Dendritic cell treated with granulocyte-macrophage colony-stimulating factor and Interleukin-4, amounts not matched to agents 40 ng/mL and 50 ng/mL, for 4 days (primary cell): ENCODE measurements at regions of chr1 and their contacts with region 1.

Region 1: GRCh38 chr1:27858072-27858958 is 14.0 kb upstream of the THEMIS2 start:
- H3K4me3 Mint-ChIP-seq: peak overlapping the region; percentile 60
- H3K27ac Mint-ChIP-seq: peak overlapping the region; percentile 88
- H3K4me1 Mint-ChIP-seq: peaks cover 54% of the 10 kb centered on the region
- H3K27me3 Mint-ChIP-seq: no peaks in the 10 kb centered on the region

Region 2: DNA sequence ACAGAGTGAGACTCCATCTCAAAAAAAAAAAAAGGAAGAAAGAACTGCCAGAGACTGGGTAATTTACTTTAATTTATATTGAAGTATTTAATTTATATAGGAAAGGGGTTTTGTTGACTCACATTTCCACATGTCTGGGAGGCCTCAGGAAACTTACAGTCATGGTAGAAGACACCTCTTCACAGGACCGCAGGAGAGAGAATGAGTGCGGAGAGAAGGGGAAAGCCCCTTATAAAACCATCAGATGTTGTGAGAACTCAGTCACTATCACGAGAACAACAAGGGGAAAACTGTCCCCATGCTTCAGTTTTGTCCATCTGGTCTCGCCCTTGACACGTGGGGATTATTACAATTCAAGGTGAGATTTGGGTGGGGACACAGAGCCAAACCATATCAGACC is 53.5 kb before region 1 on chr1:
- intact Hi-C with region 1: no loop called
- H3K4me3 Mint-ChIP-seq: no peak overlapping the region
- H3K27ac Mint-ChIP-seq: no peak overlapping the region
- H3K4me1 Mint-ChIP-seq: no peaks in the 10 kb centered on the region
- H3K27me3 Mint-ChIP-seq: no peaks in the 10 kb centered on the region

Region 3: DNA sequence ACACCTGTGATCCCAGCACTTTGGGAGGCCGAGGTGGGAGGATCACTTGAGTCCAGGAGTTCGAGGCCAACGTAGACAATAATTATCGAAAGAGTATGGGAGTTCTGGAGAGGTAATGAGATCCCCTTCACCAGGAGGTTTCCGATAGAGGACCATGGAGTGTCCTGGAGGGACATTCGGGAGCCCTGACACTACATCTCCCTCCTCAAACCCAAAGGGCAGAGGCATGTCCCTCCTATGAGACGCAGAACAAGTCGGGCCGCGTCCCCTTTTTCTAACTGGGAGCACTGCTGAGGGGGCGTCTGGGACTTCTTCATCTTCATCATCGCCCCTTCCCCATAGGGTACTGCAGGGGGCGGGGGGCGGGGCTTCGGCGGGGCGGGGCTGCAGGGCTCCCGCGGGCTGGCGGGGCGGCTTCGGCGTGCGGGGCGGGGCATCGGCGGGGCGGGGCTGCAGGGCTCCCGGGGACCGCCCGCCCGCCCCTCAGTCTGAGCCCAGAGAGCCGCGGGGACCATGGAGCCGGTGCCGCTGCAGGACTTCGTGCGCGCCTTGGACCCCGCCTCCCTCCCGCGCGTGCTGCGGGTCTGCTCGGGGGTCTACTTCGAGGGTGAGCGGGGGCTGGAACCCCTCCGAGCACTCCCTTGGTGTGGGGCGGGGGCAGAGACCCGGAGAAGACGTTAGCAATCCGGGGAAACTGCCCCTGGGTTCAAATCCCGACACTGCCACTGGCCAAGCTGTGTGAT is 13.9 kb after region 1 on chr1 and contains the start of gene THEMIS2:
- intact Hi-C with region 1: loop called (anchors 1 kb)
- H3K4me3 Mint-ChIP-seq: peak within 1 kb of the TSS; percentile 85
- H3K27ac Mint-ChIP-seq: peak within 1 kb of the TSS; percentile 84
- H3K4me1 Mint-ChIP-seq: peaks cover 59% of the 10 kb centered on the region
- H3K27me3 Mint-ChIP-seq: no peaks in the 10 kb centered on the region

Region 4: DNA sequence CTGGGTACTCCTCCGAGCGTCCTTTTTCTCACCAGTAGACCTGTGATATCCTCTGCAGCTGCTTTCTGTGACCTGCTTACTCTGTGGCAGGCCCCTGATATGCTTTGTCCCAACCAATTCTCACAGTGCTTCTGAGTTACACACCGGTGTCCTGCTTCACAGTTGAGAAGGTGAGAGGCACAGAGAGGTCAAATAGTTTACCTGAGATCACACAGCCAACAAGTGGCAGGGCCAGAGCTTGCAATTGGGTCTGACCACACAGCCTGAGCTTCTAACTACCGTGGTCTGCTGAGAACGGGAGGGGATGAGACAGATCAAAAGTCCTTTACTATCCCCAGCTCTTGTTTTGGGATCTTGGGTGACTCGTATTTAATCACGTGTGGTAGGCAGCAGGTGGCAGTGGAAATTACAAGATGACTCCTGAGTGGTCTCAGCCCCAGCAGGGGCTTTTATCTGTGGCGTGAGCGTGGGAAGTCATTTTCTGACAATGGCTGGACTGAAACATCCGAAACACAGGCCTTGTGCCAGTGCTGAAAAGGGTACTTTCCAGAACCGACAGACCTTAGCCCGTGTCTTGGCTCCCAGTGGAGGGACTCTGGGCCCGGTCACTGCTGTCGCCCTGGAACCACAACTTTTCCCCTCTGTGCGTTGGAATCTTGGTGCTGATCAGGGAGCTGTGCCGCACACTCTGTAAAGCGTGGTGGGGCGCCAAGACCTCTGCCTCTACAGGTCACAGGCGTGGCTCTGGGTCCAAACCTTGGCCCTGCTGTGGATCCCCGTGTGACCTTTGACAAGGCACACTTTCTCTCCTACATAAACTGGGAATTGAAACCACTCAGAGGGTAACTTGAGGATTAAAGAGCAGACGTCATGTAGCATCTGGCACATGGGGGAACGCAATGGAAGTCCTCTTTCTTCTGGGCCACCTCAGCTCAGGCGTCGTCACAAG is 26.0 kb after region 1 on chr1:
- intact Hi-C with region 1: loop called (anchors 2 kb)
- H3K4me3 Mint-ChIP-seq: peak overlapping the region; percentile 51
- H3K27ac Mint-ChIP-seq: peak overlapping the region; percentile 95
- H3K4me1 Mint-ChIP-seq: peaks cover 81% of the 10 kb centered on the region
- H3K27me3 Mint-ChIP-seq: no peaks in the 10 kb centered on the region

Region 5: GRCh38 chr1:27891196-27891889 is 33.0 kb after region 1 on chr1:
- intact Hi-C with region 1: loop called (anchors 1 kb)
- H3K4me3 Mint-ChIP-seq: peak overlapping the region; percentile 1
- H3K27ac Mint-ChIP-seq: peak overlapping the region; percentile 95
- H3K4me1 Mint-ChIP-seq: peaks cover 65% of the 10 kb centered on the region
- H3K27me3 Mint-ChIP-seq: no peaks in the 10 kb centered on the region

Region 6: DNA sequence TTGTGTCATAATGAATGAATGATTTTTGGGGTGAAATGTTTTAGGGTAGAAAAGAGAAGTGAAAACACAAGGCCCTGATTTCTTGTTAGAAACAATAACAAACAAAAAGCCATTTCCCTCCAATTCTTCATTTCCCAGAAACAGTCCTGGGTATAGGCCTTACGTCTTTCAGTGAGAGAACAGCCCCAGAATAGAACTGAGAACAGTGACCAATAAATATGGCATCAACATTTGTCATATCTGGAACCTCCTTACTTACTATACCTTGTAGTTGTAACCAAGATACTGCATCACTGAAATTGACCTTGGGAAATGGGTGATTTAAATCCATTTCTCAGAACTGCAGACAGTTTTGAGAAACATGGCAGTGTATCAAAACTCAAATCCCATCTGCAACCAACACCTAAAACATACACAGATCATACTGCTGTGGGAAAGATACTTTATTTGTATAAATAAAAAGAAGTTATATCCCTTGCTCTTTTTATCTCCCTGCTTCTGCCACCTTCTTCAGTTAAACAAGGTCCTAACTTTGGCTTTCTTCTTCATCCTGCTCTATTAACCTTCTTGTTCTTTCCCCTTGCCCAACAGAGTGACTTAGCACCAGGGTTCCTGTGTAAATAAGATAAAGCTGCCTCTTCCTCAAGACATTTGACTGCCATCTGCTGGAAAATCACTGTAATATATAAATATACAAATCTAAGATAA is 121.0 kb after region 1 on chr1:
- intact Hi-C with region 1: loop called (anchors 2 kb)
- H3K4me3 Mint-ChIP-seq: no peak overlapping the region
- H3K27ac Mint-ChIP-seq: no peak overlapping the region
- H3K4me1 Mint-ChIP-seq: peaks cover 6% of the 10 kb centered on the region
- H3K27me3 Mint-ChIP-seq: no peaks in the 10 kb centered on the region

Region 7: DNA sequence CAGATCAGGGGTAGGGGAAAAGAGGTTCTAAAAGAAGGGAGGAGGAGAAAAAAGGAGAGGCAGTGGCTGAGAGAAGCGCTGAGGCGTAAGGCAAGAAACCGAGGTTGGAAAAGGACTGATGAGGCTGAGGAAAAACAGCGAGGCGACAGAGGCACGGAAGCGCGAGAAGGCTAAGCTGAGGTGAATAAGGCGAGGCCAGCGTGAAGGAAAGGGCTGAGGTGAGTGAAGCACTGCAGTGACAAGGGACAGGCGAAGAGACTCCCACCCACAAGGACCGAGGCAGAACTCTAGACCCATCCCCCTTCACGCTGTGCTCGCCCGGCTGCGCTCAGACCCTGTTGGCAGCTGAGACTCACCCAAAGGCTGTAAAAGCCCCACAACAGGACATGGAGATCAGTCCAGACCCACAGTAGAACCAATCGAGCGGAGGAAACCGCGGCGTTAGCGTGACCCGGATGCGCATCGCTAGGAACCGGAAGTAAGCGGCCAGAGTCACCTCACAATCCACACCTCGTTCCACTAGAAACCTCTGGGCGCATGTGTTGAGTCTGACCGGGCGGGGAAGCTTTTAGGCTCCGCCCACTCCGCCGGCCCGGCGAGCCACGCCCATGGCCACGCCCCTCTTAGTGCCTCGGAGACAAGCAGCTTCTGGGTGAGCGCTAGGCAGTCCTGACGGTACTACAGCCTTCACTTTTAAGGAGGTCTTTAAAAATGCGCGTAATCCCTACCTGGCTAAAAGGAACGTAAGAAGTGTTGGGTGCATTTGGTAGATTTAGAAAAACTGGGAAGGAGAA is 230.1 kb after region 1 on chr1 and contains the start of gene EYA3:
- intact Hi-C with region 1: loop called (anchors 10 kb)
- H3K4me3 Mint-ChIP-seq: peak within 1 kb of the TSS; percentile 90
- H3K27ac Mint-ChIP-seq: peak within 1 kb of the TSS; percentile 93
- H3K4me1 Mint-ChIP-seq: peaks cover 57% of the 10 kb centered on the region
- H3K27me3 Mint-ChIP-seq: no peaks in the 10 kb centered on the region

Region 8: DNA sequence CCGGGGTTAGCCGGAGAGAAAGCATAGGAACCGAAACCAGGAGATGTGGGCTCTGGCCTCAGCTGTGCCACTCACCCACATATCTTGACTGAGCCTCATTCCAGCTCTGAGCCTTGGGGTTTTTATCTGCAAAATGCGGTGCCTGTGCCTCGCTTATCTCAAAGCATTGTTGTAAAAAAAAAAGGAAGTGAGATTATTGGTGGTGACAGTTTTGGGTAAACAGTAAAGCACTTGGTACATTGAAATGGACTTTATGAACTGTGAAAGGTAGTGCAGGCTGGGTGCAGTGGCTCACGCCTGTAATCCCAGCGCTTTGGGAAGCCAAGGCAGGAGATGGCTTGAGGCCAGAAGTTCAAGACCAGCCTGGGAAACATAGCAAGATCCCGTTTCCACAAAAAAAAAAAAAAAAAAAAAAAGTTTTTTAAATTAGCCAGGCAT is 314.4 kb after region 1 on chr1:
- intact Hi-C with region 1: loop called (anchors 10 kb)
- H3K4me3 Mint-ChIP-seq: peak overlapping the region; percentile 66
- H3K27ac Mint-ChIP-seq: peak overlapping the region; percentile 91
- H3K4me1 Mint-ChIP-seq: peaks cover 77% of the 10 kb centered on the region
- H3K27me3 Mint-ChIP-seq: no peaks in the 10 kb centered on the region